Natural killer cell (primary cell): ENCODE measurements at regions of chr12 and their contacts with region 1.

Region 1: GRCh38 chr12:110468212-110469048 is at the starts of genes FAM216A and GPN3:
- DNase-seq: peak; percentile 91 to 97
- ATAC-seq: peak; percentile 87 to 94 (median 89)
- H3K4me3 ChIP-seq: peak within 1 kb of the TSS; percentile 92
- H3K4me3 Mint-ChIP-seq: peak within 1 kb of the TSS; percentile 98
- H3K27ac ChIP-seq: peak within 1 kb of the TSS; percentile 81
- H3K27ac Mint-ChIP-seq: peak within 1 kb of the TSS; percentile 89 to 90
- H3K4me1 ChIP-seq: peaks cover 21% of the 10 kb centered on the region
- H3K4me1 Mint-ChIP-seq: peaks cover 23 to 29% of the 10 kb centered on the region in 2 donors
- H3K27me3 ChIP-seq: no peaks in the 10 kb centered on the region
- H3K27me3 Mint-ChIP-seq: no peaks in the 10 kb centered on the region
- CTCF ChIP-seq: no peak
- total RNA-seq, gene FAM216A: 3.1 to 4.7 (median 3.8) TPM
- total RNA-seq, gene GPN3: 4.7 to 10.4 (median 6.1) TPM

Region 2: GRCh38 chr12:110501752-110502738 is 33.6 kb after region 1 on chr12 and contains the starts of genes RAD9B and VPS29:
- intact Hi-C with region 1: loop called (anchors 1 kb)
- DNase-seq: peak; percentile 99 to 100
- ATAC-seq: peak; percentile 93 to 98 (median 94)
- H3K4me3 ChIP-seq: peak within 1 kb of the TSS; percentile 97
- H3K4me3 Mint-ChIP-seq: peak within 1 kb of the TSS; percentile 99
- H3K27ac ChIP-seq: peak within 1 kb of the TSS; percentile 91
- H3K27ac Mint-ChIP-seq: peak within 1 kb of the TSS; percentile 98 to 100
- H3K4me1 ChIP-seq: peaks cover 20% of the 10 kb centered on the region
- H3K4me1 Mint-ChIP-seq: peaks cover 29 to 33% of the 10 kb centered on the region in 2 donors
- H3K27me3 ChIP-seq: no peaks in the 10 kb centered on the region
- H3K27me3 Mint-ChIP-seq: no peaks in the 10 kb centered on the region
- CTCF ChIP-seq: no peak
- total RNA-seq, gene RAD9B: 0.18 to 1.8 (median 0.91) TPM
- total RNA-seq, gene VPS29: 94.3 to 115 (median 99.6) TPM

Region 3: DNA sequence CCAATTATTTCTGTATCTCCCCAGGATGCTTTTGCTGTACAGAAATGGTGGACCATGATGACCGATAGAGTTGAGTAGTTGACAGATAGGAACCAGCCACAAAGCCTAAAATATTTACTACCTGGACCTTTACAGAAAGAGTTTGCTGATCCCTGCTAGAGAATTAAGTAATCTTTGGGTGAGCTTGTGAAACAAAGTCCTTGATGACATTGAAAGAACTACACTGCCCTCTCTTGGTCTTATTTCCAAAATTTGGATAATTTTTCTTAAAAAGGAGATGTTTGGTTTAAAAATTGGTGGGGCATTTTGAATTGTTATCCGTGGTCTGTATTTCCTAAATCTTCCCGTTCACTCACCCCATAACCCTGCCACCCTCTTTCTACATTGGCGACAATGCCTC is 131.8 kb after region 1 on chr12:
- intact Hi-C with region 1: loop called (anchors 1 kb)
- DNase-seq: peak in 1 of 2 donors; percentile 74
- ATAC-seq: peak in 2 of 3 donors; percentile 44 to 45
- H3K4me3 ChIP-seq: no peak overlapping the region
- H3K4me3 Mint-ChIP-seq: no peak overlapping the region
- H3K27ac ChIP-seq: no peak overlapping the region
- H3K27ac Mint-ChIP-seq: peak overlapping the region in 1 of 2 donors; percentile 51
- H3K4me1 ChIP-seq: peaks cover 11% of the 10 kb centered on the region
- H3K4me1 Mint-ChIP-seq: peaks cover 5 to 6% of the 10 kb centered on the region in 2 donors
- H3K27me3 ChIP-seq: no peaks in the 10 kb centered on the region
- H3K27me3 Mint-ChIP-seq: no peaks in the 10 kb centered on the region
- CTCF ChIP-seq: peak; percentile 55

Region 4: GRCh38 chr12:110698171-110698902 is 229.9 kb after region 1 on chr12:
- intact Hi-C with region 1: loop called (anchors 5 kb)
- DNase-seq: peak; percentile 61 to 90
- ATAC-seq: peak; percentile 93 to 100 (median 99)
- H3K4me3 ChIP-seq: no peak overlapping the region
- H3K4me3 Mint-ChIP-seq: no peak overlapping the region
- H3K27ac ChIP-seq: no peak overlapping the region
- H3K27ac Mint-ChIP-seq: peak overlapping the region; percentile 34 to 65
- H3K4me1 ChIP-seq: peaks cover 28% of the 10 kb centered on the region
- H3K4me1 Mint-ChIP-seq: peaks cover 6 to 16% of the 10 kb centered on the region in 2 donors
- H3K27me3 ChIP-seq: no peaks in the 10 kb centered on the region
- H3K27me3 Mint-ChIP-seq: no peaks in the 10 kb centered on the region
- CTCF ChIP-seq: peak; percentile 86

Region 5: GRCh38 chr12:110742718-110743570 is 274.5 kb after region 1 on chr12 and contains the start of gene PPP1CC:
- intact Hi-C with region 1: loop called (anchors 5 kb)
- DNase-seq: peak; percentile 84 to 96
- ATAC-seq: peak; percentile 94 to 98 (median 95)
- H3K4me3 ChIP-seq: peak within 1 kb of the TSS; percentile 69
- H3K4me3 Mint-ChIP-seq: peak within 1 kb of the TSS; percentile 100
- H3K27ac ChIP-seq: peak within 1 kb of the TSS; percentile 30
- H3K27ac Mint-ChIP-seq: peak within 1 kb of the TSS; percentile 95 to 96
- H3K4me1 ChIP-seq: peaks cover 17% of the 10 kb centered on the region
- H3K4me1 Mint-ChIP-seq: peaks cover 51 to 56% of the 10 kb centered on the region in 2 donors
- H3K27me3 ChIP-seq: no peaks in the 10 kb centered on the region
- H3K27me3 Mint-ChIP-seq: no peaks in the 10 kb centered on the region
- CTCF ChIP-seq: no peak
- total RNA-seq, gene PPP1CC: 114 to 121 (median 117) TPM

Region 6: GRCh38 chr12:110826592-110827200 is 358.3 kb after region 1 on chr12:
- intact Hi-C with region 1: loop called (anchors 5 kb)
- DNase-seq: peak; percentile 66 to 88
- ATAC-seq: peak; percentile 79 to 91 (median 86)
- H3K4me3 ChIP-seq: no peak overlapping the region
- H3K4me3 Mint-ChIP-seq: no peak overlapping the region
- H3K27ac ChIP-seq: no peak overlapping the region
- H3K27ac Mint-ChIP-seq: no peak overlapping the region
- H3K4me1 ChIP-seq: peaks cover 6% of the 10 kb centered on the region
- H3K4me1 Mint-ChIP-seq: no peaks in the 10 kb centered on the region
- H3K27me3 ChIP-seq: no peaks in the 10 kb centered on the region
- H3K27me3 Mint-ChIP-seq: peaks cover 0 to 7% of the 10 kb centered on the region in 2 donors
- CTCF ChIP-seq: peak; percentile 69